Heart left ventricle (tissue), 16 donors: ENCODE measurements at regions of chr3 and their contacts with region 1.

Region 1: DNA sequence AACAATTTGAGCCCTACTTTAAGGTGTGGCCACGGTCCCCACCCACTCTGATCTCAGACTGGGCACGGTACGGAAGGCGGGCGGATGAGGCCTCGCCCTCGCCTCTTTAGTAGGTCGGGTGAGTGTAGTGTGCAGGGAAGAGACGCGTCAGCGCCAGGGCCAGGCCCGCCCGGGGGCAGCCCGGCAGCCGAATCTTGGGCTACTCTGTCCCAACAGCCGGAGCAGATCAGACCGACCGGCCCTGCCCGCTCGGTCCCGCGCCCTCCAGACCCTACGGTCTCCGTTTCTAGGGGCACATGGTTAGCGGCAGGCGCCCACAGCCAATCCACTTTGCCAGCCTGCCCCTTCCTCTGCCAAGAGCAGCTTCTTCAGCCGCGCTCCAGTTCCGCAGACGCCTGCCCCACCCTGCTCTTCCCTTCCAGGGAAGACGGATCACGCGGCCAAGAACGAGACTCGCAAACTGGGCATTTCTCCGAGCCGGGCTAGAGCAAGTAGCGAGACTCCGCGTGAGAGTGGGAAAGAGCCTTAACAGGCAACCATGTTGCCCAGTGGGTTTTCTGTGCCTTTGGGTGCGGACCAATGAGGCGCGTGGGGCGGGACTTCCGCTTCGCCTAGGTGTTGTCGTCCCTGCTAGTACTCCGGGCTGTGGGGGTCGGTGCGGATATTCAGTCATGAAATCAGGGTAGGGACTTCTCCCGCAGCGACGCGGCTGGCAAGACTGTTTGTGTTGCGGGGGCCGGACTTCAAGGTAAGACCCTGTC is at the start of gene RNF13:
- DNase-seq: peak; percentile 97 to 98 (median 98)
- ATAC-seq: peak; percentile 95 to 98 (median 97)
- H3K4me3 ChIP-seq: peak within 1 kb of the TSS; percentile 48 to 91 (median 78)
- H3K27ac ChIP-seq: peak within 1 kb of the TSS; percentile 89 to 99 (median 98)
- H3K4me1 ChIP-seq: peaks cover 0 to 57% (median 41%) of the 10 kb centered on the region in 12 donors
- H3K27me3 ChIP-seq: no peaks in the 10 kb centered on the region
- CTCF ChIP-seq: no peak
- POLR2A ChIP-seq: peak in 1 of 2 donors; percentile 74
- total RNA-seq, gene RNF13: 44.7 to 77.6 (median 58.1) TPM

Region 2: DNA sequence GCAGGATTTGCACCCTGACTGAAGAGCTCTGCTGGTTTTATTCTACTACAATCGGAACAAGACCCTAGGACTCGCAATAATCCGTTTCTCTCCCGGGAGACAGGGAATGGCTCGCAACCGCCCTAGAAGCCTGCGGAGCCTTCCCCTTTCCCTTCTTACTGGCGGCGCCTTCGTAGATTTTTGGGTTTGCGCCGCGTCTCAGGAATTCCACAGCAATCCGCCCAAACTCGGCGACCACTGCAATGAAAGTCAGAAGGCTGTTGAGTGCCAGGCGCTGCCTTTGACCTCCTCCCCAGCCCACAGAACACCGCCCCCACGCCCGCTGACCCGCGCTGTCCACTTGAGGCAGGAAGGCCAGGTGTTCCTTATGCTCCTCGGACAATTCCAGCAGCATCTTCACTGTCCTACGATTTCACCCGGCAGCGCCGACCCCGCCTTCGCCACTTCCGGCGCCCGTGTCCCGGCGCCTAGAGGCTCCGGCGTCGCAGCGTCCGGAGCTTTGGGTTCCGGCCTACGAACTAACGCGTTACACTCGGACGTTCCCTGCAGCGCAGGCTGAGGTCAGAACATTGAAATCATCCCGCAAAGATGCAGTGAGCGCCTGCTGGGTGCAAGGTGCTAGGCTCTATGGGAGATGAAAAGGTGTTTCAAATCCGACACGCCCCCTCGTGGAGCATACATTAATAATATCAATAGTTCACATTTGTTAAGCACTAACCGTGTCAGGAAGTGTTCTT is 60.6 kb before region 1 on chr3 and contains the start of gene COMMD2:
- intact Hi-C with region 1: loop called in 1 of 10 experiments (anchors 5 kb)
- DNase-seq: peak; percentile 67 to 84 (median 82)
- ATAC-seq: peak; percentile 91 to 99 (median 99)
- H3K4me3 ChIP-seq: peak within 1 kb of the TSS; percentile 65 to 94 (median 82)
- H3K27ac ChIP-seq: peak within 1 kb of the TSS in 11 of 12 donors; percentile 51 to 86 (median 71)
- H3K4me1 ChIP-seq: peaks cover 0 to 19% (median 9%) of the 10 kb centered on the region in 12 donors
- H3K27me3 ChIP-seq: no peaks in the 10 kb centered on the region
- CTCF ChIP-seq: peak in 11 of 12 donors; percentile 9 to 52 (median 35)
- POLR2A ChIP-seq: peak in 1 of 2 donors; percentile 53
- total RNA-seq, gene COMMD2: 9.9 to 25.8 (median 18.1) TPM

Region 3: GRCh38 chr3:149765762-149766334 is 46.9 kb before region 1 on chr3:
- intact Hi-C with region 1: loop called in 1 of 10 experiments (anchors 5 kb)
- DNase-seq: no peak
- ATAC-seq: no peak
- H3K4me3 ChIP-seq: no peak overlapping the region
- H3K27ac ChIP-seq: no peak overlapping the region
- H3K4me1 ChIP-seq: no peaks in the 10 kb centered on the region
- H3K27me3 ChIP-seq: peaks cover 0 to 23% (median 0%) of the 10 kb centered on the region in 9 donors
- CTCF ChIP-seq: peak in 8 of 12 donors; percentile 11 to 54 (median 42)
- POLR2A ChIP-seq: no peak

Region 4: DNA sequence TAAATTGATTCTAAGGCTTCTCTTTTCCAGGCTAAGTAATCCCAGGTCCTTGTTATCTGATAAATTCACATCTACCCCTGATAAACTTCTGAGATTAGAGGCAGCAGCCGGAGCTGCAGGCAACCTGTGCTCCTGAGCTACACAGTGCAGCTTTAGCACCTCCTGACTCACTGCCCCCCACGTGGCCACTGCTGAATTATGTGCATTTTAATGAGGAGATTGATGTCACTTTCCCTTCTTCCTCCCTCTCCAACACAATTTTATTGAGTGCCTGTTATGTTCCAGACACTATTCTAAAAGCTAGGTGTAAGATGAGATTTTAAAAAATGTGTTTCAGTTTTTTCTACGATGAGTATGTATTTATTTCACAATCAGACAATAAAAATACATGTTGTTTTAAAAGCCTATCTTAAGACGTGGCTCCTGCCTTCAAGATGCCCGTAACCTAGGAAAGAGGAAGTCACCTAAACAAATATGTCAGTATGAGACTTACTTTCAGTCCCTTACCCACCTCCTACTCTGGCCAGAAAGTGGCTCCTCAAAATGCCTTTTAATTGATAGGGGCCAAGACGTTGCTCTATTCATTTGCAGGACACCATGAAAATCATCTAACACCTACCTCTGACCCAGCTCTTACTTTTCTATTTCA is 319.4 kb after region 1 on chr3:
- intact Hi-C with region 1: no loop called
- DNase-seq: no peak
- ATAC-seq: no peak
- H3K4me3 ChIP-seq: no peak overlapping the region
- H3K27ac ChIP-seq: no peak overlapping the region
- H3K4me1 ChIP-seq: no peaks in the 10 kb centered on the region
- H3K27me3 ChIP-seq: no peaks in the 10 kb centered on the region
- CTCF ChIP-seq: no peak
- POLR2A ChIP-seq: no peak